ENCODE measurements at regions of chr17 and their contacts with region 1.

Region 1: GRCh38 chr17:18974407-18975132 is 22.6 kb downstream of the SLC5A10 start:
- DNase-seq: no peak
- H3K4me3 Mint-ChIP-seq: no peak overlapping the region
- H3K27ac Mint-ChIP-seq: no peak overlapping the region
- H3K4me1 Mint-ChIP-seq: peaks cover 3% of the 10 kb centered on the region
- H3K27me3 Mint-ChIP-seq: no peaks in the 10 kb centered on the region

Region 2: DNA sequence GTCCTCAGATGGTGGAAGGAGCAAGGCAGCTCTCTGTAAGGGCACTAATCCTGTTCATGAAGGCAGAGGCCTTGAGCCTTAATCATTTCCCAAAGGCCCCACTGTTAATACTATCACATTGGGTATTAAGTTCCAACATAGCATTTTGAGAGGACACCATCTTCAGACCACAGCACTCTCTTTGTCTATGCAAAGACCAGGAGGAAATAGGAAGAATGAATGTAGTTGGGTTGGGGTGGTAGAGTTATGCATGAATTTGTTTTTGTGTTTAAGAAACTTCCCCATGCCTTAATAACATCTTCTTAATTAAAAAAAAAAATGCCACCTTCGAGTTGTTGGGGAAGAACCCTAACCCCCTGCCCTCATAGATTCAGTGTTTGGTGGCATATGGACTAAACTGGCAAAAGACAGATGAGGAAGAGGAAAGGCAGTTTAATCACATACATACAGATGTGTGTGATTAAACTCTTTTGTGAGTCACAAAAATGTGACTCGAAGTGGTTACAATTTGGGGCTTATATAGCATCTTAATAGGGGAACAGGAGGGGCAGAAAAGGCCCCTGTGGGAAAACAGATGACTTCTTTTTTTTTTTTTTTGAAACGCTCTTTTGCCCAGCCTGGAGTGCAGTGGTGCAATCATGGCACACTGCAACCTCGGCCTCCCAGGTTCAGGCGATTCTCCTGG is 57.6 kb before region 1 on chr17:
- CTCF ChIA-PET with region 1: no interaction called
- POLR2A ChIA-PET with region 1: no interaction called
- DNase-seq: no peak
- H3K4me3 Mint-ChIP-seq: no peak overlapping the region
- H3K27ac Mint-ChIP-seq: no peak overlapping the region
- H3K4me1 Mint-ChIP-seq: peaks cover 19% of the 10 kb centered on the region
- H3K27me3 Mint-ChIP-seq: no peaks in the 10 kb centered on the region

Region 3: DNA sequence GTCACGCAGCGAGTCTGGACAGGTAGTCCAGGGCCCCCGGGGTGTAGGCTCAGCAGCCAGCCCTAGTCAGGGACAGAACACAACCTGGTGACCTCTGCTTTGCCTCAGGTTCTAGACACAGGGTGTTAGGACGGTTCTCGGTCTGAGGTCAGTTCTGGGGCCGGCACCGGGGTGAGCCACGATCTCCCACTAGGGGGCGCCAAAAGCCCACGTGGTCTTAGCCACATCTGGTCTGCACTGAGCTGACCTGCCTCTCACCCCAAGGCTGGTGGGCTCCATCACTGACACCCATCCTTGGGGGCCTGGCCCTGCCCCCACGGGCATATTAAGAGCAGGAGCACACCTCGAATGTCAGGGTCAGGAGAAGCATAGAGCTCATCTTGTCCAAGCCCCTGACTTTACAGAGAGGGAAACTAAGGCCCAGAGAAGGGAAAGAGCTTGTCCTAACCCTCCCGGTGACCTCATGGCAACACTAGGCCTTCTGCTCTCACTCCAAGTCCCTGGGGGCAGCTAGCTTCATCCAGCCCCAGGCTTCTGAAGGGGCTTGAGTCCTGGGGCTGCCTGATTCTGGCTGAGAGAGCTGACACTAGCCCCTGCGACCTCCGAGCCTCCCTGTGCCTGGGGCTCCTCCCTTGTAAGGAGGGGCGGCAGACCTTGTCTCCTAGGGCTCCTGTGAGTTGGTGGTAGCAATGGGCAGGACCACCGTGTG is 13.6 kb before region 1 on chr17:
- CTCF ChIA-PET with region 1: interaction called, 25 read pairs
- POLR2A ChIA-PET with region 1: no interaction called
- DNase-seq: peak; percentile 80
- H3K4me3 Mint-ChIP-seq: no peak overlapping the region
- H3K27ac Mint-ChIP-seq: no peak overlapping the region
- H3K4me1 Mint-ChIP-seq: peaks cover 6% of the 10 kb centered on the region
- H3K27me3 Mint-ChIP-seq: peaks cover 2% of the 10 kb centered on the region

Region 4: DNA sequence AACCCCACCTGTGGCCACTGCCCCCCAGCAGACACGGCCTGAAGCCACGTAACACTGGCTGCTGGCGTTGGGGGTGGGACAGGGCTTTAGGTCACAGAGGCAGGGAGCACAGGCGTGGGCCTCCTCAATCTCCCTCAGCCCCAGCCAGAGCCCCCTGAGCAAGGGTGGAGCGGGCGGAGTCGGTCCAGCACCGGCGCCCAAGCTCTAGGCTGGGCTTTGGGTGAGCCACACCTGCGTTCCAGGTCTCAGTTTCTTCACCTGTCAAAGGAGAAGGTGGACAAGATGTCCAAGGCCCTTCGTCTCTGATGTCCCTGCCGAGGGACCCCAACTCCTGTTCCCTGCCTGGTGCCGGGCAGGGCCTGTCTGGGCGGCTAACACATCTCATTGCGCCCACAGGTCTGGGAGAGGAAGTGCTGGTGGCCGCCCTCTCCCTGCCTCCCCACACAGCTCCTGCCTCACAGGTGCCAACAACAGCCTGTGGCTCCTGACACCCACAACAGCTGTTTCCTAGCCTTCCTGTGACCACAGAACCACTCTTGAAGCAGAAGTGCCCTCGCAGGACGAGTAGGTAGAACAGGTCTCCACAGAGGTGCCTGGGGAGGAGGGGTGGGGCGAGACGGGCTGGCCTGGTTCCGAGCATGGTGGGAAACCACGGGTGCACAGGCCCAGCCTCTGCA is 18.0 kb after region 1 on chr17:
- CTCF ChIA-PET with region 1: no interaction called
- POLR2A ChIA-PET with region 1: no interaction called
- DNase-seq: peak; percentile 50
- H3K4me3 Mint-ChIP-seq: no peak overlapping the region
- H3K27ac Mint-ChIP-seq: no peak overlapping the region
- H3K4me1 Mint-ChIP-seq: peaks cover 15% of the 10 kb centered on the region
- H3K27me3 Mint-ChIP-seq: no peaks in the 10 kb centered on the region

Region 5: DNA sequence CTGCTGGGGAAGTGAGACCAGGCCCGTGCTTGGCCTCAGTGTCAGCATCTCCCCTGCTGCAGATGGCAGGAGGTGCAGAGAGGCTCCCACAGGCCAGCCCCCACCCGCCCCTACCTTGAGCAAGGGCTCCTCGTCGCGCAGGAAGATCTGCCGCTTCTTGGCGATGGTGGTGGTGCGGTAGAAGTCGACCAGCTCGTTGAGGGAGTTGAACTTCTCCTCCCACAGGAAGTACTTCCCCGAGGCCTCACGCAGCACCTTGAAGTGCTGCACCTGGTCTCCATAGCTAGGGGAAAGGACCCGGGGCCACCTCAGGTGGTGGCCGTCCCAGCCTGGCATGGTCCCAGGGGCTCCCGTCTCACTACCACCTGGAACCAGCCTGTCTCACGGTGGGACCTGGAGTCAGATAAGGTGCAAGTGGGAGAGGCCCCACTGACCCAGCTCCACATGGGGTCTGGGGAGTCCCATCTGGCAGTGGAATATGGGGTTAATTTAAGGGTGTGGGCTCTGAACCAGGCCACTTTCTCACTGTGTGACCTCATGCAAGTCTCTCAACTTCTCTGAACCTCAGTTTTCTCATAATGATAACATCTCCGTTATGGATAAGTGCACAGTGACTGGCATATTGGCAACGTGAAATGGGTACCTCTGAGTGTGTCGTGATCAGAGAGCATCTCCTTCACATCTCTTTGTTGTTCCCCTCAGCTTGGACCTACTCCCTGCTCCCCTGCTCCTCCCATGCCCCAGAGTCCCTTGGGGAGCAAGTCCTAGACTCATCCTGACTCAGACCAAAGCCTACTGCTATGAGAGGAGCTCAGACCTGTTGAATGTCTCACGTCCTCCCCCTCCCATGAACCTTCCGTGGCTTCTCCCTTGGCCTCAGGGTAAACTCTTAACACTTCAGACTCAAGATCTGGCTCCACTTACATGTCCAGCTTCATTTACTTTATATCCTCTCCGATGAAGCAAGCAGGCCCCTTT is 49.8 kb after region 1 on chr17:
- CTCF ChIA-PET with region 1: no interaction called
- POLR2A ChIA-PET with region 1: no interaction called
- DNase-seq: no peak
- H3K4me3 Mint-ChIP-seq: no peak overlapping the region
- H3K27ac Mint-ChIP-seq: no peak overlapping the region
- H3K4me1 Mint-ChIP-seq: peaks cover 13% of the 10 kb centered on the region
- H3K27me3 Mint-ChIP-seq: no peaks in the 10 kb centered on the region

Measured in activated CD4-positive, alpha-beta memory T cell treated with anti-CD3 and anti-CD28 coated beads, Interleukin-2, amount 10 ng/mL, durations not matched to agents 7 days and 5 days (primary cell).